ENCODE measurements at regions of chr4 and their contacts with region 1.

Region 1: DNA sequence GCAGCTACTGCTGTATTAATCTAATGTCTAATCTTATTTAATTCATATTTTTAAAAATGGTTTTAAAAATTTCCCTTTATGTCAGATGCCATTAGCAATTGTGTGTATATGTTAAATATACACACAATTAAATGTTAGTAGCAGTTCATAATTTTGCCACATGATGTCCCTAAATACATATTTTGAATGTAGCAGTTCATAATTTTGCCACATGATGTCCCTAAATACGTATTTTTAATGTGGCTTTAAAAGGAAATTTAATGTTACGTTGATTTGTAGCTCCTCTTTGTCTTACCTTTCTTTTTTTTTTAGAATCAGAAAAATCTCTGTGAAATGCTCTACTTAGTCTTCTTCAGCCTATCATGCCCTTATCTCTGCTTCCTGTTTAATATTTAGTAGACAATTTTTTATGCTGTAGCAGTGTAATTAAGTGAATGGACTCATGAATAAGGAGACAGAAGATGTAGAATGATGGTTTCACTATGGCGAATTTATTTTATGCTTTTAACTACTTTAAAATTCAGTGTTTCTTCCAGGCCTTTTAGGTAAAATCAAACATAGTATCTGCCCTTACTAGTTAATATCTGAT is 26.1 kb downstream of the RBM46 start:
- DNase-seq: peak in 1 of 2 experiments; percentile 4
- H3K4me3 ChIP-seq: no peak overlapping the region
- H3K4me3 Mint-ChIP-seq: no peak overlapping the region
- H3K27ac Mint-ChIP-seq: no peak overlapping the region
- H3K4me1 ChIP-seq: no peaks in the 10 kb centered on the region
- H3K4me1 Mint-ChIP-seq: no peaks in the 10 kb centered on the region
- H3K27me3 ChIP-seq: no peaks in the 10 kb centered on the region
- H3K27me3 Mint-ChIP-seq: no peaks in the 10 kb centered on the region
- CTCF ChIP-seq: peak; percentile 66 to 72

Region 2: DNA sequence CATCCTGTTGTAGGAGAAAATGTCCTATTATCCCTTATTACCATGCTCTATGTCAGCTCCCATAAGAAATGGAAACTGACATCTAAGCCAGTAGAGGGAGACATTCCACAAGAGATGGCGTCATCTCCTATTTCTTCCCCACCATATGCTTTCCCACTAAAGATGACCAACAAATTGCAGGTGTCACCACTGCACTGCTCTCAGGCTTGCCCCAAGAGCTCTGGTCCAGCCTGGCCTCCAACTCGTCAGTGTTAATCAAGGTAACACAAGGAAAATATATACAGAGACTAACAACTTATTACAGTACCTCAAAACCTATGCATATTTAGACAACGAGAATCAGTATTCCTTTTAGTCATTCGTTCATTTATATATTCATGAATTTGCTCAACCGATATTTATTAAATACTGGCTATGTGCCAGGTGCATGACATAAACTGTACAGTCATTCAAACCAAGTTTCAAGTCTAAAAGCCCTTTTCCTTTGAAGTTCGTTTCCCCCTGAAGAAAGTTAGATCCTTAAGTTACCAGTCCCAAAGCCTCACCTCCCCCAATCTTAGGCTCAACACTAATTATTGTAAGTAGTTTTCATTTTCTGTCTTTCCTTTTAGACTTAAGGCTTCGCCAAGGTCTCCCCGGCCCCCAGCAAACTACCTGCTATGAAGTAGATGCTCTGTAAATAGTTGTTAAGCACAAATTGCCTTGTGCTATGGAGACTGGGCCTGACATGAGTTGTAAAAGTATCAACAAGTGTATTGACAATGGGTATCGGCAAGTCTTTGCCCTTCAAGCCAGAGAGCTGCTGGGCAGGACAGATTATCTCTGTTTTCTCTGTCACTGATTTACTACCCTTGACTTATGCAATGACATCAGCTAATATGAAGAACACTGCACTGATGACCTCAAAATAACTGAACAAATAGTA is 247.4 kb before region 1 on chr4:
- CTCF ChIA-PET with region 1: no interaction called
- POLR2A ChIA-PET with region 1: no interaction called
- intact Hi-C with region 1: no loop called
- DNase-seq: peak; percentile 69 to 73
- H3K4me3 ChIP-seq: no peak overlapping the region
- H3K4me3 Mint-ChIP-seq: no peak overlapping the region
- H3K27ac Mint-ChIP-seq: peak overlapping the region; percentile 77
- H3K4me1 ChIP-seq: peaks cover 37% of the 10 kb centered on the region
- H3K4me1 Mint-ChIP-seq: peaks cover 22% of the 10 kb centered on the region
- H3K27me3 ChIP-seq: no peaks in the 10 kb centered on the region; the same call in 1 of the 2 replicates
- H3K27me3 Mint-ChIP-seq: no peaks in the 10 kb centered on the region
- CTCF ChIP-seq: peak; percentile 68 to 79

Region 3: GRCh38 chr4:154854362-154854761 is 47.2 kb after region 1 on chr4:
- CTCF ChIA-PET with region 1: interaction called, 3 read pairs
- POLR2A ChIA-PET with region 1: no interaction called
- intact Hi-C with region 1: loop called (anchors 5 kb)
- DNase-seq: no peak
- H3K4me3 ChIP-seq: no peak overlapping the region
- H3K4me3 Mint-ChIP-seq: no peak overlapping the region
- H3K27ac Mint-ChIP-seq: no peak overlapping the region
- H3K4me1 ChIP-seq: no peaks in the 10 kb centered on the region
- H3K4me1 Mint-ChIP-seq: no peaks in the 10 kb centered on the region
- H3K27me3 ChIP-seq: no peaks in the 10 kb centered on the region
- H3K27me3 Mint-ChIP-seq: peaks cover 2% of the 10 kb centered on the region
- CTCF ChIP-seq: peak in 1 of 2 experiments; percentile 6

Region 4: GRCh38 chr4:154911097-154911496 is 104.0 kb after region 1 on chr4:
- CTCF ChIA-PET with region 1: interaction called, 4 read pairs
- POLR2A ChIA-PET with region 1: no interaction called
- intact Hi-C with region 1: loop called (anchors 1 kb)
- DNase-seq: peak in 1 of 2 experiments; percentile 6
- H3K4me3 ChIP-seq: no peak overlapping the region
- H3K4me3 Mint-ChIP-seq: no peak overlapping the region
- H3K27ac Mint-ChIP-seq: no peak overlapping the region
- H3K4me1 ChIP-seq: no peaks in the 10 kb centered on the region
- H3K4me1 Mint-ChIP-seq: no peaks in the 10 kb centered on the region
- H3K27me3 ChIP-seq: no peaks in the 10 kb centered on the region; the same call in 1 of the 2 replicates
- H3K27me3 Mint-ChIP-seq: peaks cover under 1% of the 10 kb centered on the region
- CTCF ChIP-seq: peak in 1 of 2 experiments; percentile 12

Region 5: GRCh38 chr4:154928640-154929257 is 121.6 kb after region 1 on chr4:
- CTCF ChIA-PET with region 1: interaction called, 6 read pairs
- POLR2A ChIA-PET with region 1: no interaction called
- intact Hi-C with region 1: loop called (anchors 1 kb)
- DNase-seq: peak; percentile 16 to 42
- H3K4me3 ChIP-seq: no peak overlapping the region
- H3K4me3 Mint-ChIP-seq: no peak overlapping the region
- H3K27ac Mint-ChIP-seq: no peak overlapping the region
- H3K4me1 ChIP-seq: no peaks in the 10 kb centered on the region
- H3K4me1 Mint-ChIP-seq: no peaks in the 10 kb centered on the region
- H3K27me3 ChIP-seq: no peaks in the 10 kb centered on the region
- H3K27me3 Mint-ChIP-seq: peaks cover 3% of the 10 kb centered on the region
- CTCF ChIP-seq: peak in 1 of 2 experiments; percentile 50

Region 6: DNA sequence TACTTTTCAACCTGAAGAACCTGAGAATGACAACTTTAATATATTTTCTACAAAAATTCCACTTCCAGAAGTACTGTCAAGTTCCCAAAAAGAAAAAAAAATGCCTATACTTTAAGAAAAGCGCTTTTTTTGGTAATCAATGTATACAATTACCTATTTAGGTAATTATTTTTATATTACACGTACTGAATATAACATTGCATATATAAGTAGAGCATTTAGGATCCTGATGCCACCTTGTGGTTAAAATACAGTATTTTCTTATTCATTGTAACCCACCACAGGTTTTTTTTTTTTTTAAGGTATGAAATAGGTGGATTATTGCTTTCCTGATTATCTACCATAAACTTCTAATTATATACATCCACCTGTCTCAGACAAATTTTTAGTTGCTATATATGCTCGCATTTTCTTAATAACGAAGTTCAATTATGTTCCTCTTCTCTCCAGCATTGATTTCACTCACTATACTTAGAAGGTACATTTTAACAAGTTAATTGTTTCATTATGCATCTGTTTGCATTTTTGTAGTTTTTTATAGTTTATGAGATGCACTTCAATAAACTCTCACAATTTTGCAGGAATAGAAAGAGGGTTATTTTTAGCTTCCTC is 564.4 kb after region 1 on chr4:
- CTCF ChIA-PET with region 1: no interaction called
- POLR2A ChIA-PET with region 1: no interaction called
- intact Hi-C with region 1: loop called (anchors 2 kb)
- DNase-seq: no peak
- H3K4me3 ChIP-seq: no peak overlapping the region
- H3K4me3 Mint-ChIP-seq: no peak overlapping the region
- H3K27ac Mint-ChIP-seq: no peak overlapping the region
- H3K4me1 ChIP-seq: no peaks in the 10 kb centered on the region
- H3K4me1 Mint-ChIP-seq: no peaks in the 10 kb centered on the region
- H3K27me3 ChIP-seq: no peaks in the 10 kb centered on the region
- H3K27me3 Mint-ChIP-seq: peaks cover 6% of the 10 kb centered on the region
- CTCF ChIP-seq: peak; percentile 17 to 35